GM12878 (cell line): ENCODE measurements at regions of chr3 and their contacts with region 1.

Region 1: GRCh38 chr3:194070634-194071409 is 65.1 kb upstream of the HES1 start:
- DNase-seq: peak; percentile 50
- ATAC-seq: peak; percentile 97
- H3K4me3 ChIP-seq: peak overlapping the region; percentile 42; the same call in 1 of the 2 replicates
- H3K27ac ChIP-seq: no peak overlapping the region
- H3K4me1 ChIP-seq: peaks cover 8% of the 10 kb centered on the region
- H3K27me3 ChIP-seq: peaks cover 0 to 2% of the 10 kb centered on the region in 2 experiments; a peak in 2 of 4 replicates
- CTCF ChIP-seq: no peak
- EP300 ChIP-seq: peak in 1 of 2 experiments; percentile 63; a peak in 1 of 4 replicates
- POLR2A ChIP-seq: peak; percentile 49; the same call in 1 of the 2 replicates
- RAD21 ChIP-seq: 0 out of 2 replicates have a peak, but pooled peaks have one; percentile 13

Region 2: GRCh38 chr3:194045289-194045688 is 25.5 kb before region 1 on chr3:
- CTCF ChIA-PET with region 1: no interaction called
- POLR2A ChIA-PET with region 1: no interaction called
- RAD21 ChIA-PET with region 1: no interaction called
- SMC1A ChIA-PET with region 1: no interaction called
- in situ Hi-C with region 1: no loop called
- intact Hi-C with region 1: loop called (anchors 1 kb)
- DNase-seq: peak; percentile 41
- ATAC-seq: peak; percentile 94
- H3K4me3 ChIP-seq: no peak overlapping the region
- H3K27ac ChIP-seq: no peak overlapping the region
- H3K4me1 ChIP-seq: peaks cover 9% of the 10 kb centered on the region; the same call in 1 of the 2 replicates
- H3K27me3 ChIP-seq: no peaks in the 10 kb centered on the region
- CTCF ChIP-seq: no peak
- EP300 ChIP-seq: no peak
- POLR2A ChIP-seq: no peak
- RAD21 ChIP-seq: no peak

Region 3: GRCh38 chr3:194224471-194225415 is 153.9 kb after region 1 on chr3:
- CTCF ChIA-PET with region 1: no interaction called
- POLR2A ChIA-PET with region 1: no interaction called
- RAD21 ChIA-PET with region 1: no interaction called
- SMC1A ChIA-PET with region 1: no interaction called
- in situ Hi-C with region 1: no loop called
- intact Hi-C with region 1: no loop called
- DNase-seq: no peak
- ATAC-seq: no peak
- H3K4me3 ChIP-seq: no peak overlapping the region
- H3K27ac ChIP-seq: no peak overlapping the region
- H3K4me1 ChIP-seq: no peaks in the 10 kb centered on the region
- H3K27me3 ChIP-seq: peaks cover 3 to 9% of the 10 kb centered on the region in 2 experiments; a peak in 3 of 4 replicates
- CTCF ChIP-seq: no peak
- EP300 ChIP-seq: no peak
- POLR2A ChIP-seq: no peak
- RAD21 ChIP-seq: no peak